Caco-2 (cell line): ENCODE measurements at regions of chr1 and their contacts with region 1.

Region 1: DNA sequence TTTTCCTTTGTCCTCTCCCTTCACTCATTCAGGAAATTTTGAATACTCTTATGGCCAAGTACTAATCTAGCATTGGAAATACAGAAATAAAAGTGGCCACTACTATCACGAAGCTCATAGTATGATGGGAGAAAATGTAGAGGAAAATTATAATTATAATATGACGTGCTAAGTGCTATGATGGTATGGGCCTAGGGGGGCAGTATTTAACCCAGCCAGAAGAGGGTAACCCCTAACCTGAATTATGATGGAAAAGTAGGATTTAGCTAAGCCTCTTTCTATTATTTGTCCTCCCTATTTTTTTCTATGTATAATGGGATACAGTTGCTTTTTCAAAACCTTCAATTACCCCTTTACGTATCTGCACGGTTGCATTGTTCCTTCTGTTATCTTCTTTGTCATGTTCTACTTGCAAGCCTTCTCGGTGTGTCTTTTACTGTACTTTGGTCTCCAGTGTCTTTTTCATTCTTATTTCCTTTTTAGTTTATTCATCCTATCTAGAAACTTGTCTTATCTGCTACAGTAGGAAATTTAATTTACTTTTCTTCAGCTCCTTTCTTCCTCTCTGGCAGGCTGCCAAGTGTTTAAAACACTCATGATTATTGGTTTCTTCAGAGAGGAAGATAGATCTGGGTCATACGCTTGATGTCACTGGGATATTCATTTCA is 88.8 kb upstream of the GPR52 start:
- DNase-seq: no peak
- H3K4me3 ChIP-seq: no peak overlapping the region
- H3K4me3 Mint-ChIP-seq: no peak overlapping the region
- H3K27ac Mint-ChIP-seq: no peak overlapping the region
- H3K4me1 ChIP-seq: no peaks in the 10 kb centered on the region
- H3K4me1 Mint-ChIP-seq: no peaks in the 10 kb centered on the region
- H3K27me3 ChIP-seq: no peaks in the 10 kb centered on the region
- H3K27me3 Mint-ChIP-seq: no peaks in the 10 kb centered on the region
- CTCF ChIP-seq: no peak

Region 2: DNA sequence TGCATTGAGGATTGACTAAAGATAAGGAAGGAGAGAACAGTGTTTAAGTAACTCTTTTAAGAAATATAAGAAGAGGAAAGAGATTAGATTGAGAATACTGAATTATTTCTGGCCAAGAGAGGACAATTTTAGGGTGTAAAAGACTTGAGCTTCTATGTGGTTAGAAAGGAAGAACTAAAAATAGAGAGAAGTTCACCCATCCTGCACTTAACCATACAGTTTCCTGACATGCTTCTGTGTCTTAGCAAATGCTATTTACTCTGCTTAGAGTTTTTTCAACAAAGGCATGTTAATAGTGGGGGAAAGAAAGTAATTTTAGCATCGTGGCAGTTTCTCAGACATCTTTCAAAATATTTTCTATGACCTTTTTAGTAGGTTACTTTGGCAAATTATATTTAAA is 34.0 kb before region 1 on chr1:
- CTCF ChIA-PET with region 1: no interaction called
- POLR2A ChIA-PET with region 1: no interaction called
- intact Hi-C with region 1: loop called (anchors 5 kb)
- DNase-seq: no peak
- H3K4me3 ChIP-seq: no peak overlapping the region
- H3K4me3 Mint-ChIP-seq: no peak overlapping the region
- H3K27ac Mint-ChIP-seq: no peak overlapping the region
- H3K4me1 ChIP-seq: no peaks in the 10 kb centered on the region
- H3K4me1 Mint-ChIP-seq: no peaks in the 10 kb centered on the region
- H3K27me3 ChIP-seq: no peaks in the 10 kb centered on the region
- H3K27me3 Mint-ChIP-seq: no peaks in the 10 kb centered on the region
- CTCF ChIP-seq: no peak